Heart right ventricle (tissue), 16 donors: ENCODE measurements at regions of chr7 and their contacts with region 1.

Region 1: GRCh38 chr7:5997222-5997808 is 11.5 kb downstream of the PMS2 start:
- DNase-seq: peak in 1 of 2 donors; percentile 60
- ATAC-seq: peak in 7 of 8 donors; percentile 53 to 79 (median 75)
- H3K4me3 ChIP-seq: no peak overlapping the region
- H3K27ac ChIP-seq: no peak overlapping the region
- H3K4me1 ChIP-seq: peaks cover 0 to 5% (median 0%) of the 10 kb centered on the region in 9 donors
- H3K27me3 ChIP-seq: no peaks in the 10 kb centered on the region
- CTCF ChIP-seq: peak; percentile 24 to 76 (median 67)

Region 2: GRCh38 chr7:6049780-6050179 is 52.5 kb after region 1 on chr7:
- intact Hi-C with region 1: loop called in 1 of 10 experiments (anchors 10 kb)
- DNase-seq: no peak
- ATAC-seq: peak in 3 of 8 donors; percentile 73 to 81 (median 79)
- H3K4me3 ChIP-seq: no peak overlapping the region
- H3K27ac ChIP-seq: peak overlapping the region in 6 of 10 donors; percentile 59 to 78 (median 73)
- H3K4me1 ChIP-seq: peaks cover 0 to 7% (median 0%) of the 10 kb centered on the region in 9 donors
- H3K27me3 ChIP-seq: no peaks in the 10 kb centered on the region
- CTCF ChIP-seq: no peak

Region 3: DNA sequence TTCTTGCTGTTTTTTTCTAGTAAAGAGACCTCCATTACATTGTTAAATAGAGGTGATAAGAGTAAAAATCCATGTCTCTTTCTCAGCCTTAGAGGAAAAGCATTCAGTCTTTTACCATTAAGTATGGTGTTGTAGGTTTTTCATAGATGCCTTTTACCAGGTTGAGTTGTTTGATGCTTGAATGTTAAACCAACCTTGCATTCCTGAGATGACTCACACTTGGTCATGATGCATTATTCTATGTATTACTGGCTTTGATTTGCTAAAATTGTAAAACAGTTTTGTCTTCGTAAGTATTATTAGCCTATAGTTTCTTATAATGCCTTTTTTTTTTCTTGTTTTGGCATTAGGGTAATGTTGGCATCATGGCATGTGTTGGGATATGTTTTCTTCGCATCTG is 123.8 kb after region 1 on chr7:
- intact Hi-C with region 1: loop called in 1 of 10 experiments (anchors 5 kb)
- DNase-seq: no peak
- ATAC-seq: no peak
- H3K4me3 ChIP-seq: no peak overlapping the region
- H3K27ac ChIP-seq: no peak overlapping the region
- H3K4me1 ChIP-seq: no peaks in the 10 kb centered on the region
- H3K27me3 ChIP-seq: no peaks in the 10 kb centered on the region
- CTCF ChIP-seq: no peak

Region 4: GRCh38 chr7:6323967-6324701 is 326.8 kb after region 1 on chr7:
- intact Hi-C with region 1: loop called in 2 of 10 experiments (anchors 5 to 10 kb)
- DNase-seq: no peak
- ATAC-seq: no peak
- H3K4me3 ChIP-seq: no peak overlapping the region
- H3K27ac ChIP-seq: no peak overlapping the region
- H3K4me1 ChIP-seq: peaks cover 0 to 9% (median 0%) of the 10 kb centered on the region in 9 donors
- H3K27me3 ChIP-seq: no peaks in the 10 kb centered on the region
- CTCF ChIP-seq: no peak